Activated CD4-positive, alpha-beta memory T cell treated with anti-CD3 and anti-CD28 coated beads, Interleukin-2, amount 10 ng/mL, durations not matched to agents 7 days and 5 days (primary cell): ENCODE measurements at regions of chr4 and their contacts with region 1.

Region 1: GRCh38 chr4:80173401-80173800 is 23.9 kb upstream of the PRDM8 start:
- DNase-seq: peak; percentile 71
- H3K4me3 Mint-ChIP-seq: peak overlapping the region; percentile 55
- H3K27ac Mint-ChIP-seq: peak overlapping the region; percentile 97
- H3K4me1 Mint-ChIP-seq: peaks cover 56% of the 10 kb centered on the region
- H3K27me3 Mint-ChIP-seq: no peaks in the 10 kb centered on the region

Region 2: GRCh38 chr4:80017125-80017854 is 156.1 kb before region 1 on chr4:
- CTCF ChIA-PET with region 1: no interaction called
- POLR2A ChIA-PET with region 1: interaction called, 15 read pairs
- DNase-seq: no peak
- H3K4me3 Mint-ChIP-seq: no peak overlapping the region
- H3K27ac Mint-ChIP-seq: no peak overlapping the region
- H3K4me1 Mint-ChIP-seq: peaks cover 26% of the 10 kb centered on the region
- H3K27me3 Mint-ChIP-seq: no peaks in the 10 kb centered on the region

Region 3: GRCh38 chr4:80072744-80073472 is 100.5 kb before region 1 on chr4 and contains the start of gene ANTXR2:
- CTCF ChIA-PET with region 1: interaction called, 13 read pairs
- POLR2A ChIA-PET with region 1: interaction called, 71 read pairs
- DNase-seq: peak; percentile 83
- H3K4me3 Mint-ChIP-seq: peak within 1 kb of the TSS; percentile 87
- H3K27ac Mint-ChIP-seq: peak within 1 kb of the TSS; percentile 92
- H3K4me1 Mint-ChIP-seq: peaks cover 73% of the 10 kb centered on the region
- H3K27me3 Mint-ChIP-seq: no peaks in the 10 kb centered on the region
- total RNA-seq, gene ANTXR2: 113 to 114 TPM

Region 4: GRCh38 chr4:80138551-80139538 is 34.6 kb before region 1 on chr4:
- CTCF ChIA-PET with region 1: interaction called, 38 read pairs
- POLR2A ChIA-PET with region 1: interaction called, 83 read pairs
- DNase-seq: peak; percentile 79
- H3K4me3 Mint-ChIP-seq: peak overlapping the region; percentile 18
- H3K27ac Mint-ChIP-seq: peak overlapping the region; percentile 88
- H3K4me1 Mint-ChIP-seq: peaks cover 63% of the 10 kb centered on the region
- H3K27me3 Mint-ChIP-seq: no peaks in the 10 kb centered on the region

Region 5: GRCh38 chr4:80153874-80154544 is 19.4 kb before region 1 on chr4:
- CTCF ChIA-PET with region 1: interaction called, 5 read pairs
- POLR2A ChIA-PET with region 1: interaction called, 10 read pairs
- DNase-seq: no peak
- H3K4me3 Mint-ChIP-seq: no peak overlapping the region
- H3K27ac Mint-ChIP-seq: peak overlapping the region; percentile 9
- H3K4me1 Mint-ChIP-seq: peaks cover 10% of the 10 kb centered on the region
- H3K27me3 Mint-ChIP-seq: peaks cover 2% of the 10 kb centered on the region

Region 6: DNA sequence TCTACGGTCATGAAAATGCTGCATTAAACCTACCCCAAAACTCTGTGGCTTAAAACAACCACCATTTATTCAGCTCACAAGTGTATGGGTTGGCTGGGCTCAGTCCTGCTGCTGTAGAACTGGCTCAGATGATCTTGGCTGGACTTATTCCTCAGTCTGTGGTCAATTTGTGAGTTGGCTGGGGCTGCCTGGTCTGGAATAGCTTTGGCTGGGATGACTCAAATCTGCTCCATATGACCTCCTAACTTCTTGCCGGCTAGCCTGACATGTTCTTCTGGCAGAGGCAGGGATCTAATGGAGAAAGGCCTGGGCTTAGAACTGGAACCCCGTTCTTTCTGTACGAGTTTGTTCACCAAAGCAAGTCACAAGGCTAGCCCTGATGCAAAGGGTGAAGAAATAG is 233.8 kb after region 1 on chr4:
- CTCF ChIA-PET with region 1: no interaction called
- POLR2A ChIA-PET with region 1: no interaction called
- DNase-seq: no peak
- H3K4me3 Mint-ChIP-seq: no peak overlapping the region
- H3K27ac Mint-ChIP-seq: no peak overlapping the region
- H3K4me1 Mint-ChIP-seq: no peaks in the 10 kb centered on the region
- H3K27me3 Mint-ChIP-seq: peaks cover 3% of the 10 kb centered on the region